ENCODE measurements at regions of chr2 and their contacts with region 1.

Region 1: GRCh38 chr2:178152033-178152432 is 39.8 kb downstream of the RBM45 start:
- DNase-seq: no peak
- CTCF ChIP-seq: no peak

Region 2: GRCh38 chr2:178136321-178137025 is 15.6 kb before region 1 on chr2:
- CTCF ChIA-PET with region 1: interaction called, 10 read pairs
- POLR2A ChIA-PET with region 1: no interaction called
- DNase-seq: no peak
- CTCF ChIP-seq: no peak

Measured in GM10248 (cell line).